Left cardiac atrium (tissue), 4 donors: ENCODE measurements at regions of chr1 and their contacts with region 1.

Region 1: GRCh38 chr1:231487019-231487418 is 41.5 kb upstream of the TSNAX start:
- DNase-seq: no peak
- ATAC-seq: no peak

Region 2: GRCh38 chr1:231431665-231432415 is 55.2 kb before region 1 on chr1:
- intact Hi-C with region 1: loop called in 1 of 2 experiments (anchors 10 kb)
- DNase-seq: no peak
- ATAC-seq: no peak